GM13976 (cell line): ENCODE measurements at regions of chr5 and their contacts with region 1.

Region 1: GRCh38 chr5:151647320-151647861 is 39.3 kb downstream of the SPARC start:
- DNase-seq: no peak
- CTCF ChIP-seq: no peak

Region 2: GRCh38 chr5:150946351-150946905 is 701.0 kb before region 1 on chr5:
- in situ Hi-C with region 1: no loop called
- DNase-seq: no peak
- CTCF ChIP-seq: no peak

Region 3: GRCh38 chr5:151432210-151432609 is 215.2 kb before region 1 on chr5:
- in situ Hi-C with region 1: loop called (anchors 10 kb)
- DNase-seq: no peak
- CTCF ChIP-seq: no peak

Region 4: GRCh38 chr5:151534350-151534749 is 113.0 kb before region 1 on chr5:
- in situ Hi-C with region 1: loop called (anchors 10 kb)
- DNase-seq: no peak
- CTCF ChIP-seq: no peak

Region 5: GRCh38 chr5:151947925-151948608 is 300.7 kb after region 1 on chr5:
- in situ Hi-C with region 1: no loop called
- DNase-seq: no peak
- CTCF ChIP-seq: no peak